Gastrocnemius medialis (tissue), 4 donors: ENCODE measurements at regions of chr16 and their contacts with region 1.

Region 1: DNA sequence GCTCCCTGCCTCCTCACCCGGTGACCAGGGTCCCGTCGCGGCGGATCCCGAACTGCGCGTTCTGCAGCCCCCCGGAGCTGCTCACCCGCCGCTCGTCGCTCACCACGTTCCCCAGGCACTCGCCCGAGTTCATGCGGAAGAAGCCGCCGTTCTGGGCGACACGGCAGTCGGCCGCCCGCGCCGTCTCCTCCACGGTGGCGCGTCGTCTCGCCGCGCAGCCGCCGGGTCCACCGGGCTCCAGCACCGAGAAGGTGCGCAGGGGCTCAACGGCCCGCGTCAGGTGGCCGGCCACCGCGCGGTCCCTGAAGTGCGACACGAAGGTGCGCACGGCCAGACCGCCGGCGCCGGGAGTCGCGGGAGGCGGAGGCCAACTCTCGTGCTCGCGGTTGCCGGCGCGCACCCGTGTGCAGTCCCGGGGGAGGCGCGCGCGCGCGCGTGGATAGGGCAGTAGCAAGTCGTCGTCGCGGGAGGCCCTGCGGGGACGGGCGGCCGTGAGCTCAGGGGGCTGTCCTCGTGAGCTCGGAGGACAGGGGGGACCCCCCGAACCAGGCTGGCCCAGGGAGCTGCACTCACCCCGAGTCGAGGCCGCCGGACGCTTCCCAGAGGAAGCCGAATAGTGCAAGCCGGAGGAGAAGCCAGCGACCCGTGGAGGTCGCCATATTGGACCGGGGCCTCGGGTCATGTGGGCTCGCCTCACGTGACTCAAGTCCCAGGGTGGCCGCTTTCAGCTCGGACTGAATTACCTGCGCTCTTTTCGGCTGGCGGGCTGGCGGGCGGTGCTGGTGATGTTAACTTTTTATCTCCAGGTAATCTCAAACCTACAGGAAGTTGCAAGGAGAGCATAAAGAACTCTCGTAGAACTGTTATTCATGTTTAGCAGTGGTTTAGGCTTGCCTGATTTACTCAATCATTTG is at the start of gene NAGPA:
- DNase-seq: peak; percentile 81 to 85
- ATAC-seq: peak; percentile 94 to 95
- H3K4me3 ChIP-seq: peak within 1 kb of the TSS; percentile 77 to 91 (median 88)
- H3K27ac ChIP-seq: peak within 1 kb of the TSS; percentile 39 to 77 (median 64)
- H3K4me1 ChIP-seq: peaks cover 13 to 17% of the 10 kb centered on the region in 2 donors
- H3K27me3 ChIP-seq: no peaks in the 10 kb centered on the region
- CTCF ChIP-seq: peak in 1 of 5 experiments; percentile 23
- POLR2A ChIP-seq: no peak
- total RNA-seq, gene NAGPA: 15.1 to 27.5 (median 27.4) TPM

Region 2: GRCh38 chr16:5071681-5072333 is 38.3 kb after region 1 on chr16 and contains the start of gene ALG1:
- in situ Hi-C with region 1: no loop called
- intact Hi-C with region 1: loop called (anchors 1 kb)
- DNase-seq: peak; percentile 72 to 84
- ATAC-seq: peak; percentile 95 to 97
- H3K4me3 ChIP-seq: peak within 1 kb of the TSS; percentile 76 to 98 (median 91)
- H3K27ac ChIP-seq: peak within 1 kb of the TSS; percentile 72 to 88 (median 82)
- H3K4me1 ChIP-seq: peaks cover 8 to 13% of the 10 kb centered on the region in 2 donors
- H3K27me3 ChIP-seq: no peaks in the 10 kb centered on the region
- CTCF ChIP-seq: peak in 1 of 5 experiments; percentile 29
- POLR2A ChIP-seq: peak; percentile 41 to 52
- total RNA-seq, gene ALG1: 4.8 to 17.1 (median 9.7) TPM